CD8-positive, alpha-beta T cell (primary cell): ENCODE measurements at regions of chr5 and their contacts with region 1.

Region 1: DNA sequence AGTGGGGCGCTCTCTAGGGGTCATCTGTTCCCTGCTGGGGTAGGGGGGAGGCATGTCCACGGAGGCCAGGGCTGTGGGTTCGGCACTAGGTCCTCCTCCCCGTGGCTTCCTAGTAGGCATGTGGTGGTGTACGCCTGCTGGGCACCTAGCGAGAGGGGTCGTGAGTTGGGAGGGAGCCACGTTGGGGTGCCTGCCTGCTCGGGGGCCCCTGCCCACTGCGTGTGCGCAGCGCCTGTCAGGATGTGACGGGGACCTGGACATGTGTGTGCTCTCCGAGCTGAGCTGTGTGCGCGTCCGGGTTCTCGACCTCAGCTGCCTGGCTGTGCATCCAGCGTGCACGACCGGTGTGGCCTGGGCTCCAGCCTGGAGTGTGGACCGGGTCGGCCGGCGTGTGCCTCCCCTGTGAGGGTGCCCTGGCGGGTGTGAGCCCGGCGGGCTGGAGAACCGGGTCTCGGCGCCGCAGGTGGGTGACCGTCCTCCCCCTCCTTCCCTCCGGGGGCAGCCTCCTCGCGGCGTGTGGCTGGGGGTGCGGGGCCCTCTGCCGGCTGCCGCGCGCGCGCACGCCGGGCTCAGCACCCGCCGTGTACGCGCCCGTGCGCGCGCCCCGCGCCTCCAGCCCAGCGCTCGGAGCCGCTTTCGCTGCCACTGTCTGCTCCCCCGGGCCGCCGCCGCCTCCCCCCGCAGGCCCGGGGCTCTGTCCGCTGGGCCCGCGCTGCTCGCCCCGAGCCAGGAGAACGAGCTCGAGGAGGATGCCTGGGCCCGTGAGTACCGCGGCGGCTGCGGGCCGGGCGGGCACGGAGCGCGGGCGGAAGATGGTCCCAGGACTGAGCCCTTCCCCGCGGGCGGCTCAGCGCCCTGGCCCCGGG is at the start of gene PRR7:
- DNase-seq: peak; percentile 51 to 93 (median 75)
- ATAC-seq: peak; percentile 54
- H3K4me3 ChIP-seq: peak within 1 kb of the TSS; percentile 56 to 61
- H3K4me3 Mint-ChIP-seq: peak within 1 kb of the TSS; percentile 79
- H3K27ac ChIP-seq: peak within 1 kb of the TSS; percentile 61 to 84
- H3K27ac Mint-ChIP-seq: peak within 1 kb of the TSS; percentile 95
- H3K4me1 ChIP-seq: peaks cover 33% of the 10 kb centered on the region
- H3K4me1 Mint-ChIP-seq: peaks cover 44% of the 10 kb centered on the region
- H3K27me3 ChIP-seq: no peaks in the 10 kb centered on the region
- H3K27me3 Mint-ChIP-seq: no peaks in the 10 kb centered on the region
- CTCF ChIP-seq: no peak
- total RNA-seq, gene PRR7: 21.0 TPM

Region 2: DNA sequence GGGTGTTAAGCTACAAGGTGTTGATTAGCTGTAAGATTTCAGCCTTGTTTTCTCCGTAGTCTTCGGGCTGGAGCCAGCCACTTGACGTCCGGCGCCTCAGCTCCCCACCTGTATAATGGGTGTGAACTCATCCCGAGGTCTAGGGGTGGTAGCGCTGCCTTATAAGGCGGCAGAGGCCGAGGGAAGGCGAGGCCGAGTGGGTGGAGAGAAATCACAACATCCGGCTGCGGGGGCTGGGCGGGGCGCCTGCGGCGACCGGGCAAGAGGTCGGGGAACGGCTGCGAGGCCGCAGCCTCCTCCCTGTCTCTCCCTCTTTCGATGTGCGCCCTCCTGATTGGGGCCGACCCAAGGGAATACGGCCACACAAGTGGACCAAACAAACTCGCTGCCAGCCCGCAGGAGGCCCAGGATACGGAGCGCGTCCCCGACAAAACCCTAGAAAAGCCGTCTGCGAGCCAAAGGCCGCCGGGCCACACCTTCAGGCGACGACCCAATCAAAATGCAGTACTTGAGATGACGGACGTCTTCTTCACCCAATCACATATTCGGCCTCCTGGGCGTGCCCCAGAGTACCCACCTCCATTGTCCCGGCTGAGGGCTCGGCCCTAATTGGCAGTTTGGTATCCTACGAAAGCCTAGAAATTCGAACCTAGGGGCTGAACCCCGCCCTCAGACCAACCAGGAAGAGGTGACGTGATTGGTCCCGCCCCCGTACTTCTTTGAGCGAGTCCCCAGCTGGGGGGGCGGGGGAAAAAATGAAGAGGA is 20.4 kb before region 1 on chr5:
- CTCF ChIA-PET with region 1: interaction called, 285 read pairs
- POLR2A ChIA-PET with region 1: interaction called, 498 read pairs
- intact Hi-C with region 1: loop called (anchors 1 kb)
- DNase-seq: peak; percentile 99 to 100 (median 99)
- ATAC-seq: peak; percentile 80
- H3K4me3 ChIP-seq: peak overlapping the region; percentile 63 to 65
- H3K4me3 Mint-ChIP-seq: peak overlapping the region; percentile 91
- H3K27ac ChIP-seq: peak overlapping the region; percentile 86 to 92
- H3K27ac Mint-ChIP-seq: peak overlapping the region; percentile 98
- H3K4me1 ChIP-seq: peaks cover 46% of the 10 kb centered on the region
- H3K4me1 Mint-ChIP-seq: peaks cover 53% of the 10 kb centered on the region
- H3K27me3 ChIP-seq: no peaks in the 10 kb centered on the region
- H3K27me3 Mint-ChIP-seq: no peaks in the 10 kb centered on the region
- CTCF ChIP-seq: no peak

Region 3: GRCh38 chr5:177431317-177432142 is 14.9 kb before region 1 on chr5:
- CTCF ChIA-PET with region 1: interaction called, 285 read pairs
- POLR2A ChIA-PET with region 1: interaction called, 498 read pairs
- intact Hi-C with region 1: loop called (anchors 1 kb)
- DNase-seq: peak in 8 of 9 experiments; percentile 59 to 93 (median 78)
- ATAC-seq: peak; percentile 44
- H3K4me3 ChIP-seq: peak overlapping the region; percentile 37 to 98
- H3K4me3 Mint-ChIP-seq: peak overlapping the region; percentile 91
- H3K27ac ChIP-seq: peak overlapping the region; percentile 69 to 89
- H3K27ac Mint-ChIP-seq: peak overlapping the region; percentile 91
- H3K4me1 ChIP-seq: peaks cover 91% of the 10 kb centered on the region
- H3K4me1 Mint-ChIP-seq: peaks cover 66% of the 10 kb centered on the region
- H3K27me3 ChIP-seq: no peaks in the 10 kb centered on the region
- H3K27me3 Mint-ChIP-seq: no peaks in the 10 kb centered on the region
- CTCF ChIP-seq: no peak